PC-9 (cell line): ENCODE measurements at regions of chr7 and their contacts with region 1.

Region 1: GRCh38 chr7:117612642-117613041 is 132.8 kb downstream of the CFTR start:
- DNase-seq: no peak
- H3K4me3 ChIP-seq: no peak overlapping the region
- H3K27ac ChIP-seq: no peak overlapping the region
- H3K4me1 ChIP-seq: 0 out of 2 replicates have a peak, but pooled peaks cover 5% of the 10 kb centered on the region
- H3K27me3 ChIP-seq: no peaks in the 10 kb centered on the region
- CTCF ChIP-seq: no peak

Region 2: DNA sequence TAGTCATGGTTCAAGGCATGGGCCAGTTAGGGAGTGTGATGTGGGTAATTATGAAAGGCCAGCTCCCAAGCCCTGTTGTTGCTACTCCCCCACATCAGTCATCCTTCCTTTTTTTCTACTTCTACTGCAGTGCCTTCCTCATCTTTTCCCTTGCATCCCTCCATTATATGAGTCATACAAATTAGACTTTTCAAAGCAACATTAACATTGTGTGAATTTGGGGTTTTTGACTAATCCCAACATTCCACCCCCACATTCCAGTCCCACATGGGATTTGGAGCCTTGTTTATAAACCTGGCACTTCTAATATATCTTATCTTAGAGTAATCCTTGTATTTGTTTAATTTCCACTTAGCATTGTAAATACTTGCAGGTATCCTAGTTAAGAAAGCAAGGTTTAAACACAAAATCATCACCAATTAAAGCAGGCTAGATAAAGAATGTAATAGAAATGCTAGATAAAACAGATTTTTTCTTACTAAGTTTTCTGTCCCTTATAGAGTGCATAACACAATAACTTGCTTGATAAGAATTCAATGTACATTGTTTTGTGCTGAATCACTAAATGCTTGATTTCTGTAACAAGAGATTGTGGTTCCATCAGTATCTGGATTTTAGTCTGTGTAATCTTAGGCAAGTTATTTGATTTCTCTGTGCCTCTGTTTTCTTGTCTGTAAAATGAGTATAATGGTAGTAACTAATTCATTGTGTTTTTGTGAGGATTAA is 33.0 kb after region 1 on chr7:
- CTCF ChIA-PET with region 1: no interaction called
- POLR2A ChIA-PET with region 1: interaction called, 10 read pairs
- intact Hi-C with region 1: no loop called
- DNase-seq: peak in 1 of 2 experiments; percentile 42
- H3K4me3 ChIP-seq: no peak overlapping the region
- H3K27ac ChIP-seq: no peak overlapping the region
- H3K4me1 ChIP-seq: 0 out of 2 replicates have a peak, but pooled peaks cover 4% of the 10 kb centered on the region
- H3K27me3 ChIP-seq: no peaks in the 10 kb centered on the region
- CTCF ChIP-seq: no peak